GM10248 (cell line): ENCODE measurements at regions of chr5 and their contacts with region 1.

Region 1: GRCh38 chr5:4976902-4977301 is 163.2 kb upstream of the ADAMTS16 start:
- DNase-seq: no peak
- CTCF ChIP-seq: no peak

Region 2: GRCh38 chr5:4720831-4721230 is 256.1 kb before region 1 on chr5:
- CTCF ChIA-PET with region 1: no interaction called
- POLR2A ChIA-PET with region 1: no interaction called
- DNase-seq: no peak
- CTCF ChIP-seq: no peak

Region 3: DNA sequence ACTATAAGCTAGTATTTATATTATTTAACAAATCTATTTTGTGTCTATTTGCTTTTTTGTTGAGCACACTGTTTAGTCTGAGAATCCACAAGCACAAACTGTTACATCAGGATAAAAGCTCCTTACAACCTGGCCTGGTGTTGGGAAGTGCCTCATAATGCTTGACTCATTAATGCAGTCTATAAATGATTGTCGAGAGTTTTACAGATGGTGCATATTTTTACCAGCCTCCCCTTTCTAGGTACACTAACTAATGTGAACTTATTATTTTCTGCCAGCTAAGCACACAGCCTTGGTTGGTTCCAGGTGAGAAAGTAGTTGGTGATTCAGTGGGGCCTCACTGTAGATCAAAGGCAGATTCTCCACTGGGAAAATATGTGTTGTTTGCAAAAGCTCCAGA is 12.2 kb after region 1 on chr5:
- CTCF ChIA-PET with region 1: interaction called, 10 read pairs
- POLR2A ChIA-PET with region 1: no interaction called
- DNase-seq: no peak
- CTCF ChIP-seq: no peak